Aorta (tissue), 5 donors: ENCODE measurements at regions of chr10 and their contacts with region 1.

Region 1: GRCh38 chr10:47311932-47312662 is 10.2 kb upstream of the GDF2 start:
- DNase-seq: peak; percentile 90 to 95
- ATAC-seq: peak; percentile 92
- H3K4me3 ChIP-seq: no peak overlapping the region
- H3K27ac ChIP-seq: no peak overlapping the region
- H3K4me1 ChIP-seq: no peaks in the 10 kb centered on the region
- H3K27me3 ChIP-seq: no peaks in the 10 kb centered on the region

Region 2: GRCh38 chr10:47047671-47048525 is 264.2 kb before region 1 on chr10:
- intact Hi-C with region 1: loop called (anchors 1 to 2 kb)
- DNase-seq: peak; percentile 87 to 95
- ATAC-seq: peak; percentile 75
- H3K4me3 ChIP-seq: no peak overlapping the region
- H3K27ac ChIP-seq: no peak overlapping the region
- H3K4me1 ChIP-seq: peaks cover 0 to 2% of the 10 kb centered on the region in 2 donors
- H3K27me3 ChIP-seq: no peaks in the 10 kb centered on the region

Region 3: DNA sequence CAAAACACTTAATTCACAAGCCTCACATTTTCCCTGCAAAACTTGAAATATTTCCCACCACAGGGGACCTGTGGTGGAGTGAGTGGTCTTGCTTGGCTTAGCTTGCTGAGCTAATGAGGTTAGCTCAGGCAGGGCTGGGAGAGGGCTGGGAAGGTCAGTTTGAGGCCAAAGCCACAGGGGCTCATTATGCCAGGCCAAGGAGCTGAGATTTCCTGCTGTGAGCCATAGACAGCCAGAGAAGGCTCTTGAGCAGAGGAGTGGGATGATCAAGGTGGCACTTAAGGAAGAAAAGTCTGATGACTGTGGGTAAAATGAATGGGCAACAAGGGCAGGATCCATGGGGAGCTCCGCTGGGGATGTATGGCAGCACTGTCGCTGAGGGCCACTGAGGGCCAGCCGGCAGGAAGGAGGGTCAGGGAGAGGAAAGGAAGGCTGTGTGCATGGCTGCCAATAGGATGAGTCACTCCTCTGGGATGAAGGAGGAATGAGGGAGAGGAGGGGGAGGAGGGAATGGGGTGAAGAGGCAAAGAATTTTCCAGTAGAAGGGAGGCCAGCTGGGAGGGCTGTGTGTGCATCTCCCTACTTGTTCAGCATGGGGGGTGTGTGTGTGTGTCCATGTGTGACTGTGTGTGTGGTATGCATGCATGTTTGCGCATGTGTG is 90.7 kb after region 1 on chr10:
- intact Hi-C with region 1: no loop called
- DNase-seq: peak; percentile 73 to 83
- ATAC-seq: peak; percentile 85
- H3K4me3 ChIP-seq: no peak overlapping the region
- H3K27ac ChIP-seq: no peak overlapping the region
- H3K4me1 ChIP-seq: no peaks in the 10 kb centered on the region
- H3K27me3 ChIP-seq: no peaks in the 10 kb centered on the region